K562 (cell line): ENCODE measurements at regions of chr11 and their contacts with region 1.

Region 1: GRCh38 chr11:134322553-134322952 is 9.2 kb upstream of the GLB1L2 start:
- DNase-seq: no peak
- ATAC-seq: no peak
- H3K4me3 ChIP-seq: no peak overlapping the region
- H3K27ac ChIP-seq: no peak overlapping the region
- H3K4me1 ChIP-seq: peaks cover 0 to under 1% of the 10 kb centered on the region in 2 experiments; a peak in 3 of 5 replicates
- H3K27me3 ChIP-seq: peaks cover 3 to 6% of the 10 kb centered on the region in 2 experiments; a peak in 3 of 5 replicates
- CTCF ChIP-seq: no peak
- EP300 ChIP-seq: no peak
- POLR2A ChIP-seq: no peak
- RAD21 ChIP-seq: no peak

Region 2: DNA sequence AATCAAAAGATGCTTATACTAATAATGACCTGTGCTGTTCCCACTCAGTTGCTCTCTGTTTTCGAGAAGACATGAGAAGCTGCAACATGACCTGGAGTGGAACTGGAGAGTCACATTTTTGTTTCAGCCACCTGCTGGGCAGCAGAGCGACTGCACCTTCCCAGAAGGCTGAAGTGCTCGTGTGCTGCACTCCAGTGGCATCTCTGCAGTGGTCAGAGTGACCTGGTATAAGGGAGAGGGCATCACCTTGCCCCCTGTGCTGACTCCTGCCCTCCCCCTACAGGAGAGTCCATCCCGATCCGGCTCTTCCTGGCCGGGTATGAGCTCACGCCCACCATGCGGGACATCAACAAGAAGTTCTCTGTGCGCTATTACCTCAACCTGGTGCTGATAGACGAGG is 77.9 kb before region 1 on chr11:
- CTCF ChIA-PET with region 1: no interaction called
- POLR2A ChIA-PET with region 1: no interaction called
- in situ Hi-C with region 1: no loop called
- intact Hi-C with region 1: no loop called
- DNase-seq: peak in 2 of 4 experiments; percentile 31 to 38
- ATAC-seq: peak; percentile 80
- H3K4me3 ChIP-seq: no peak overlapping the region
- H3K27ac ChIP-seq: no peak overlapping the region
- H3K4me1 ChIP-seq: peaks cover 0 to 9% of the 10 kb centered on the region in 2 experiments; a peak in 1 of 5 replicates
- H3K27me3 ChIP-seq: no peaks in the 10 kb centered on the region
- CTCF ChIP-seq: peak; percentile 54 to 76 (median 58)
- EP300 ChIP-seq: no peak
- POLR2A ChIP-seq: no peak
- RAD21 ChIP-seq: peak in 1 of 2 experiments; percentile 44; a peak in 2 of 4 replicates

Region 3: DNA sequence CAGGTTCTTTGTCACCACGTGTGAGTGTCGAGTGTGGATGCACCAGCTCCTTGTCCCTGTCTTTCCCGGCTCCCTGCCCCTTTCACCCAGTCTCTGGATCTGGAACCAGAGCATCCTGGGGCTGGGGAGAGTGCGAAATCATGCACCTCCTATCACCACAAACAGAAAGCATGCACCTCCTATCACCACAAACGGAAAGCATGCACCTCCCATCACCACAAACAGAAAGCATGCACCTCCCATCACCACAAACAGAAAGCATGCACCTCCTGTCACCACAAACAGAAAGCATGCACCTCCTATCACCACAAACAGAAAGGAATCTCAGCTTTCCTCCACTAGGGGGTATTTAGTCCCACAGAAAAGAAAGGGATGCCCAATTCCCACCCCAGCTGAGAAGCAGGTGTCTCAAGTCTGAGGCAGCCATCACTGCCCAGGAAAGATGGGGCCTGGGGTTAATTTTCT is 52.3 kb before region 1 on chr11:
- CTCF ChIA-PET with region 1: no interaction called
- POLR2A ChIA-PET with region 1: no interaction called
- in situ Hi-C with region 1: no loop called
- intact Hi-C with region 1: loop called (anchors 5 kb)
- DNase-seq: peak in 3 of 4 experiments; percentile 43 to 54 (median 51)
- ATAC-seq: peak; percentile 69
- H3K4me3 ChIP-seq: no peak overlapping the region
- H3K27ac ChIP-seq: no peak overlapping the region
- H3K4me1 ChIP-seq: peaks cover 0 to 4% of the 10 kb centered on the region in 2 experiments; a peak in 2 of 5 replicates
- H3K27me3 ChIP-seq: peaks cover 22 to 47% of the 10 kb centered on the region in 2 experiments
- CTCF ChIP-seq: peak; percentile 27 to 35 (median 33); a peak in 1 of 6 replicates
- EP300 ChIP-seq: no peak
- POLR2A ChIP-seq: no peak
- RAD21 ChIP-seq: peak in 1 of 2 experiments; percentile 49; a peak in 2 of 4 replicates